ENCODE measurements at regions of chr1 and their contacts with region 1.

Region 1: GRCh38 chr1:13960375-13960987 is 260.5 kb downstream of the PRDM2 start:
- DNase-seq: peak; percentile 52
- ATAC-seq: no peak
- H3K4me3 Mint-ChIP-seq: no peak overlapping the region
- H3K27ac Mint-ChIP-seq: no peak overlapping the region
- H3K4me1 Mint-ChIP-seq: no peaks in the 10 kb centered on the region
- H3K27me3 Mint-ChIP-seq: peaks cover 37% of the 10 kb centered on the region
- CTCF ChIP-seq: peak; percentile 94

Region 2: GRCh38 chr1:13807213-13807612 is 153.3 kb before region 1 on chr1:
- CTCF ChIA-PET with region 1: no interaction called
- POLR2A ChIA-PET with region 1: no interaction called
- intact Hi-C with region 1: loop called (anchors 2 kb)
- DNase-seq: no peak
- ATAC-seq: peak; percentile 43
- H3K4me3 Mint-ChIP-seq: no peak overlapping the region
- H3K27ac Mint-ChIP-seq: no peak overlapping the region
- H3K4me1 Mint-ChIP-seq: peaks cover 57% of the 10 kb centered on the region
- H3K27me3 Mint-ChIP-seq: no peaks in the 10 kb centered on the region
- CTCF ChIP-seq: no peak

Region 3: DNA sequence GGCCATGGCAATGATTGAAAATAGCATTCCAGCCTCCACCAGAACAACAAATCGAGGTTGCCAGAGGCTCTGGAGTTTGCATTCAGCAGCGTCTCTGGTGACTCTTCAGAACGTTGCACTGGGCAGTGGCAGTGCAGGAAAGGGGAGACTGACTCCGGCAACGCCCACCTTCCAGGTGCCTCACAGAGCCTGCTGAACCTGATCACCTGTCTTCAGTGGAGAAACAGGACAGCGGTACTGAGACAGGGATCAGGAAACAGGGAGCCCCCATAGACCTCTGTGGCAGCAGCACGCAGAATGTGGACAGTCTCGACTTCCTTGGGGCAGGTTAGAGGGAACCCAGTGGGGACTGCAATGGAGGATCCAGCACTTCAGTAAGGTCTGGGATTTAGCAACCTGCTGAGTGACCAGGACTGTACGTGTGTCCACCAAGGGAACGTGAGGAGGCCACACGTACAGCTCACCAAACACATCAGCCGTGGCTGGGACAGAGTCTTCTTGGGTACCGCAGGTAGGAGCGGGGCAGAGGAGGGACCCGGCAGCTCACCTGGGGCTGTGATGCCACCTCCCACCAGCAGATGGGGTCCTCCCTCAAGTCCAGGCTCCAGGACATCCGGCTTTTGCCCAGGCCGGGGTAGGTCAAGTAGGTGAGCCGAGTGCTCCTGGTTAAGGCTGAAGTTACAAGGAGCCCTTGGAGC is 131.9 kb before region 1 on chr1:
- CTCF ChIA-PET with region 1: no interaction called
- POLR2A ChIA-PET with region 1: no interaction called
- intact Hi-C with region 1: loop called (anchors 5 kb)
- DNase-seq: no peak
- ATAC-seq: no peak
- H3K4me3 Mint-ChIP-seq: no peak overlapping the region
- H3K27ac Mint-ChIP-seq: no peak overlapping the region
- H3K4me1 Mint-ChIP-seq: peaks cover 2% of the 10 kb centered on the region
- H3K27me3 Mint-ChIP-seq: peaks cover 9% of the 10 kb centered on the region
- CTCF ChIP-seq: no peak

Region 4: DNA sequence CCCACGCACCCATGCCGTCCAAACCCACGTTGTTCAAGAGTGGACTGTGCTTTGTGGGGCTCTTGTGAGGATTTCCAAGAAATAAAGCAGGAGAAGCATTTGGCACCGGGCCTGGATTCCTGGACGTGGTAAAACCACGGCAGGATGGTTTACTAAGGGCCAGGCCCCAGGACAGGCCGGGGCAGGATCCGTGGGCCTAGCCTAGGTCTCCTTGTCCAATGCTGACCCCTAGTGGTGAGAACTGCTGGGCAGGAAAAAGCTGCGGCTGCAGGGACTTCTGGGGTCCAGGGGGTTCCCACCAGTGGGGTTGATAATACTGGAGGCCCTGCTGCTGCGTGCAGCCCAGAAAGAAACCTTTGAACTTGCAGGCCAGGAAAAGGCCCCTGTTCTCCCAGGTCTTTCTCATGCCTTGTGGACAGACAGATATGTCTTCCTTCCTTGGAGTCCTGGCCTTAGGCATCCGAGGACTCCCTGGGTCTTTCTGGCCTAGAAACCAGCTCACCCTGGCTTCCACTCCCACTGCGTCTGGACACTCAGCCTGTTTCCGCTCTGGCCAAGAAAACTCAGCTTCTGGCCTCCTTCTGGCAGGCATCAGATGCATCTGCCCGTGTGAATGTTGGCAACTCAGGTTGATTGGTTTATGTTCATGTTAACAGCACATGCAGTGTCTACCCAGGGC is 1086.1 kb after region 1 on chr1:
- CTCF ChIA-PET with region 1: no interaction called
- POLR2A ChIA-PET with region 1: no interaction called
- intact Hi-C with region 1: loop called (anchors 10 kb)
- DNase-seq: peak; percentile 26
- ATAC-seq: no peak
- H3K4me3 Mint-ChIP-seq: no peak overlapping the region
- H3K27ac Mint-ChIP-seq: no peak overlapping the region
- H3K4me1 Mint-ChIP-seq: no peaks in the 10 kb centered on the region
- H3K27me3 Mint-ChIP-seq: no peaks in the 10 kb centered on the region
- CTCF ChIP-seq: peak; percentile 39